ENCODE measurements at regions of chr3 and their contacts with region 1.

Region 1: DNA sequence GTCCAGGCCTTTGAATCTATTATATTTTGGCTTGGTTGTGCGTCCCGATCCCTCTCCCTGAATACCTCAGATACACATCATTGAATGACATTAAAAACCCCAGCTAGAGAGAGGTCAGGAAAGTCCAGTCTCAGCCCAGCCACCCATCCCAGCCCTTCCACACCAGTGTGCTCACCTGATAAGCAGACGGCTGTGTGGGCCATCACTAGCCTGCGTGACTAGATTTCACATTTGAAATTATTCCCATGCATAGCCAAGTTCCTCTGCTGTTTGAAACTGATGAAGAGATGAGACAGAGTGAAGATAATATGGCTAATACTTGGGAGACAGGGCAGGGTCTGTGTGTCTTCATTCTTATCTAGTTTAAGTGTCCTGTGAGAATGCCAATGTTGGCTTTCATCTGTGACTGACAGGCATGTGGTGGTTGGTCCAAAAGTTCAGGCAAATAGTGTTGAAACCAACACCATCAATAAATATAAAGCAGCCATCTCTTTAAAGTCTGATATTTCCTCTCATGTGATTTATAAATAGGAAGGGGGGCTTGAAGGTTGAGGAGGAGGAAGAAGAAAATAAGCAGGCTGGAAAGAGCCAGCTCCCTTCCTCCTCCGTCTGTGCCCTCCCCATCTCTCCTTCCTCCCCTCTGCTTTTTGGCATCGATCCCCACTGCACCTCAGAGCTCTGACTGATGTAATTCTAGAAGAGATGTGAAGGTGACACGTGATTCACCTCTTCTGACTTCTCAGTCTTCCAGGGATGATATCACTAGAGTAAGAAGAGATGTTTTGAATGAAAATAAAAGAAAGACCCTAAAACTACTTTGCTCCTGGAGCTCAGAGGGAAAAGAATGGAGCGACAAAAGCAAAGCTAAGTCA is 5.1 kb downstream of the FAM43A start:
- DNase-seq: no peak
- ATAC-seq: no peak; the same call in 1 of the 2 replicates
- H3K4me3 ChIP-seq: no peak overlapping the region
- H3K27ac ChIP-seq: peak overlapping the region; percentile 78
- H3K4me1 ChIP-seq: peaks cover 37% of the 10 kb centered on the region
- H3K27me3 ChIP-seq: no peaks in the 10 kb centered on the region
- CTCF ChIP-seq: no peak

Region 2: DNA sequence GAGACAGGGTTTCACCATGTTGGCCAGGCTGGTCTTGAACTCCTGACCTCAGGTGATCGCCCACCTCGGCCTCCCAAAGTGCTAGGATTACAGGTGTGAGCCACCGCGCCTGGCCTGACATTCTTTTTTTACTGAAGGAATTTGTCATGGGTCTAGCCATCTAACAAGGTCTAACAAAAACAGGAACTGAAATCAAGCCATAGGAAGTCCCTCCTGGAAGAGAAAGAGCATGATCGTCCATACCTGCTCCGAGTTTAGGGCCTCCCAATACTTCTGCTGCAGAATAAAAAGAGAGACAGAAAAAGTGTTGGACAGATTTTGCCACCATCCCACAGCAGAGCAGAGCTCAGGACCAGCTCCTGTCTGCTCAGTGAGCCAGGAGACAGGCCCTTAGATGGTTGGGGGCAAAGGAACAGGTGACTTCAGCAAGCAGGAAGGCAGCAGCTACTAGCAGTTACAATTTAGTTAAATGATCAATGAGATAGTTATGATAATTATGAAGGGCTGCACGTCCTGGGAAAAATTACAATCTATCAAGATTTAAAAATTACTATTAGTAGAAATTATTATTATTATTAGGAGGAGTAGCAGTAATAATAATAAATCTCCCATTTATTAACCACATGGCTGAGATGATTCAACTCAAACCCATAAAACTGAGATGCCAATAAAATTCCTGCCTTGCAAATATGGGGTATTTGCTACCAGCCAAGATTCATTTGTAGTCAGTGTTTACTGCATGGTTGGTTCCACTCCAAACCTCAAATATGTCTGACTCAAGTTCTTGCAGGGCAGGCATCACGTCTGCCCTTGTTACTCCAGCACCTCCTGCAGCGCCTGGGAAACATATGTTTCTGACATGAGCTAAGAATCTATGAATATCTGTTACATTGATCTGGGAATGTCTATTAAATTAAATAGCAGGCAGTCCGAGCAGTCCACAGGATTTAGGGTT is 97.7 kb before region 1 on chr3:
- CTCF ChIA-PET with region 1: no interaction called
- POLR2A ChIA-PET with region 1: no interaction called
- in situ Hi-C with region 1: no loop called
- intact Hi-C with region 1: no loop called
- DNase-seq: peak; percentile 97
- ATAC-seq: peak; percentile 94
- H3K4me3 ChIP-seq: no peak overlapping the region
- H3K27ac ChIP-seq: peak overlapping the region; percentile 79
- H3K4me1 ChIP-seq: peaks cover 24% of the 10 kb centered on the region
- H3K27me3 ChIP-seq: no peaks in the 10 kb centered on the region
- CTCF ChIP-seq: no peak

Region 3: GRCh38 chr3:194736277-194736895 is 45.6 kb after region 1 on chr3:
- CTCF ChIA-PET with region 1: no interaction called
- POLR2A ChIA-PET with region 1: interaction called, 12 read pairs
- in situ Hi-C with region 1: no loop called
- intact Hi-C with region 1: no loop called
- DNase-seq: no peak
- ATAC-seq: peak; percentile 28; the same call in 1 of the 2 replicates
- H3K4me3 ChIP-seq: no peak overlapping the region; a peak in 1 of 4 replicates
- H3K27ac ChIP-seq: no peak overlapping the region
- H3K4me1 ChIP-seq: peaks cover 9% of the 10 kb centered on the region
- H3K27me3 ChIP-seq: no peaks in the 10 kb centered on the region
- CTCF ChIP-seq: no peak

Region 4: GRCh38 chr3:194787072-194787471 is 96.3 kb after region 1 on chr3:
- CTCF ChIA-PET with region 1: no interaction called
- POLR2A ChIA-PET with region 1: no interaction called
- in situ Hi-C with region 1: no loop called
- intact Hi-C with region 1: no loop called
- DNase-seq: no peak
- ATAC-seq: no peak
- H3K4me3 ChIP-seq: no peak overlapping the region
- H3K27ac ChIP-seq: no peak overlapping the region
- H3K4me1 ChIP-seq: no peaks in the 10 kb centered on the region
- H3K27me3 ChIP-seq: no peaks in the 10 kb centered on the region
- CTCF ChIP-seq: no peak